ENCODE measurements at regions of chr1 and their contacts with region 1.

Region 1: GRCh38 chr1:31054349-31054748 is 11.2 kb downstream of the PUM1 start:
- DNase-seq: peak; percentile 21
- ATAC-seq: peak; percentile 79
- H3K4me3 Mint-ChIP-seq: no peak overlapping the region
- H3K27ac Mint-ChIP-seq: peak overlapping the region; percentile 74
- H3K4me1 Mint-ChIP-seq: peaks cover 63% of the 10 kb centered on the region
- H3K27me3 Mint-ChIP-seq: no peaks in the 10 kb centered on the region

Region 2: GRCh38 chr1:30942326-30942963 is 111.9 kb before region 1 on chr1:
- CTCF ChIA-PET with region 1: no interaction called
- POLR2A ChIA-PET with region 1: no interaction called
- intact Hi-C with region 1: no loop called
- DNase-seq: no peak
- ATAC-seq: no peak
- H3K4me3 Mint-ChIP-seq: no peak overlapping the region
- H3K27ac Mint-ChIP-seq: no peak overlapping the region
- H3K4me1 Mint-ChIP-seq: no peaks in the 10 kb centered on the region
- H3K27me3 Mint-ChIP-seq: no peaks in the 10 kb centered on the region

Region 3: GRCh38 chr1:30969903-30970302 is 84.4 kb before region 1 on chr1:
- CTCF ChIA-PET with region 1: no interaction called
- POLR2A ChIA-PET with region 1: interaction called, 10 read pairs
- intact Hi-C with region 1: no loop called
- DNase-seq: no peak
- ATAC-seq: no peak
- H3K4me3 Mint-ChIP-seq: no peak overlapping the region
- H3K27ac Mint-ChIP-seq: no peak overlapping the region
- H3K4me1 Mint-ChIP-seq: peaks cover 10% of the 10 kb centered on the region
- H3K27me3 Mint-ChIP-seq: no peaks in the 10 kb centered on the region

Region 4: GRCh38 chr1:31027693-31028526 is 26.4 kb before region 1 on chr1:
- CTCF ChIA-PET with region 1: interaction called, 3 read pairs
- POLR2A ChIA-PET with region 1: no interaction called
- intact Hi-C with region 1: loop called in 1 of 2 experiments (anchors 2 kb)
- DNase-seq: no peak
- ATAC-seq: no peak
- H3K4me3 Mint-ChIP-seq: no peak overlapping the region
- H3K27ac Mint-ChIP-seq: peak overlapping the region; percentile 5
- H3K4me1 Mint-ChIP-seq: peaks cover 76% of the 10 kb centered on the region
- H3K27me3 Mint-ChIP-seq: no peaks in the 10 kb centered on the region